Activated CD4-positive, alpha-beta T cell treated with anti-CD3 and anti-CD28 coated beads for 36 hours (primary cell): ENCODE measurements at regions of chr11 and their contacts with region 1.

Region 1: DNA sequence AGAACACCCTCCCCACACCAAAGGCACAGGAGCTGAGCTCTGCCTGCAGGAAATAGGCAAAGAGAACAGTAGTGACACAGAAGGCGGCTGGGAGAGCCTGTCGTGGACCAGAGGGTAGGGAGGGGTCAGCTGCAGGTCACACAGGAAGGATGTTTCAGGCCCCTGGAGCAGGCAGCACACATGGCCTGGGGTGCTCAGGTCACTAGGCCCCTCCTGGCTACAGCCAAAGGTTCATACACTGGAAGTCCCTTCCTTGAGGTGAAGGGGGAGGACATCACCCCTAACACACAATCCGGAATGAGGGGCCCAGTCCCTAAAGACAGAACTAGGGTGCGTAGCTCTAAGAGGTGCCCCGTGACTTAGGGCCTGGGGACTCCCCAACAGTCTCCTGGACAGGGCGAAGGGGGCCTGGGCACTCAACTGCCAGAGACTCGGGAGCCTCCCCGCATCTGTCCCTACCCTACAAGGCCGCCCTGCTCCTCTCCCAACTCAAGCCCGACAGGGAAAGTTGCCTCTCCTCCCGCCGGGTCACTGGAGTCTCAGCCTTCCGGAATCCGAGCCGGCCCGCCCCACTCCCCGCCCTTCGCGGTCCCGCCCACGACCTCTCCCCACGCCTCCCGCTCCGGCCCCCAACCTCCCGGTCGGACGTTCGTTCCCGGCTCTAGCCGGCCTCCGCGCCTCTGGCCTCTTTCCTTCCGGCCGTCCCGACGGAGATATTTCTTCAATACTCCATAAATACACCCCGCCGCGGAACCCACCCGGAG is at the start of gene CYB5R2:
- DNase-seq: peak; percentile 30
- ATAC-seq: no peak
- H3K4me3 Mint-ChIP-seq: peak within 1 kb of the TSS; percentile 62
- H3K27ac Mint-ChIP-seq: no peak within 1 kb of the TSS
- H3K4me1 Mint-ChIP-seq: peaks cover 38% of the 10 kb centered on the region
- H3K27me3 Mint-ChIP-seq: peaks cover 39% of the 10 kb centered on the region
- total RNA-seq, gene CYB5R2: 6.6 to 8.2 TPM

Region 2: GRCh38 chr11:5703741-5704536 is 1969.2 kb before region 1 on chr11:
- CTCF ChIA-PET with region 1: no interaction called
- POLR2A ChIA-PET with region 1: no interaction called
- intact Hi-C with region 1: loop called in 1 of 2 experiments (anchors 10 kb)
- DNase-seq: no peak
- ATAC-seq: no peak
- H3K4me3 Mint-ChIP-seq: no peak overlapping the region
- H3K27ac Mint-ChIP-seq: no peak overlapping the region
- H3K4me1 Mint-ChIP-seq: peaks cover 42% of the 10 kb centered on the region
- H3K27me3 Mint-ChIP-seq: no peaks in the 10 kb centered on the region

Region 3: GRCh38 chr11:7571640-7572000 is 101.5 kb before region 1 on chr11:
- CTCF ChIA-PET with region 1: no interaction called
- POLR2A ChIA-PET with region 1: no interaction called
- intact Hi-C with region 1: no loop called
- DNase-seq: peak; percentile 47
- ATAC-seq: no peak
- H3K4me3 Mint-ChIP-seq: no peak overlapping the region
- H3K27ac Mint-ChIP-seq: no peak overlapping the region
- H3K4me1 Mint-ChIP-seq: peaks cover 19% of the 10 kb centered on the region
- H3K27me3 Mint-ChIP-seq: peaks cover 9% of the 10 kb centered on the region